ENCODE measurements at regions of chr6 and their contacts with region 1.

Region 1: DNA sequence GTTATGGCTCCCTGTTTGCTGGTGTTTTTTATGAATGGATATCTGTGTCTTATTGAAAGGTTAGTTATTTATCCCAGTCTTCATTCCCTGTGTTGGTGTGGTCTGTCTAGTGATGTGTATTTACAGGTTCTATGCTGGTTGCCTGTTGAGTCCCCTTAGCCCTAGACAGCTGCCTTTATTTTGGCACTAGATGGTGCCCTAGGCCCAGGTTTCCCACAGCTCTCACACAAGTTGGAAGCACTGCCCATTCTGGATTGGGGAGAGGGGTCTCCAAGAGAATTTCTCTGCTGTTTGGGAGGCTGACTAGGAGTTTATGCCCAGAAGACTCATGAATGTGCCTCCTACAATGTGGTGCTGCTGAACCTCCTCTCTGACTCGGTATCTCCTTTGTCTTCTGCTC is 12.4 kb downstream of the GRM1 start:
- DNase-seq: peak; percentile 32
- H3K4me3 Mint-ChIP-seq: no peak overlapping the region
- H3K27ac Mint-ChIP-seq: no peak overlapping the region
- H3K4me1 Mint-ChIP-seq: no peaks in the 10 kb centered on the region
- H3K27me3 Mint-ChIP-seq: no peaks in the 10 kb centered on the region
- CTCF ChIP-seq: peak; percentile 31

Region 2: GRCh38 chr6:146009338-146009737 is 31.9 kb before region 1 on chr6:
- CTCF ChIA-PET with region 1: no interaction called
- intact Hi-C with region 1: no loop called
- DNase-seq: no peak
- H3K4me3 Mint-ChIP-seq: no peak overlapping the region
- H3K27ac Mint-ChIP-seq: no peak overlapping the region
- H3K4me1 Mint-ChIP-seq: no peaks in the 10 kb centered on the region
- H3K27me3 Mint-ChIP-seq: no peaks in the 10 kb centered on the region
- CTCF ChIP-seq: no peak

Region 3: DNA sequence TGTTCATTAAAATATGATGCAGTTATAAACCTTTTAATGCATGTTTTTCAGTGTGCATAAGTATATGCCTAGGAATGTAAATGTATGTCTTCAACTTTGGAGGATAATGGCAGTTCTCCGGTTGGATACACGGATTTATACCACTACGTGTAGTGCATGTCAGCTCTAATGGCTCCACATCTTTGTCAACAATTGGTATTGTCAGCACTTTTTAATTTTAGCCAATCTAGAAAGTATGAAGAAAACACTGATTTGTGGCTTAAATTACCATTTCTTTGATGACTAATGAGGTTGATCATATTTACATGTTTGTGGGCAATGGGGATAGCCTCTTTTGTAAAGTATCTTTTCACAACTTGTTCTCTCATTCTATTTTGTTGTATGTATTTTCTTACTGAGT is 491.4 kb after region 1 on chr6:
- CTCF ChIA-PET with region 1: no interaction called
- intact Hi-C with region 1: loop called (anchors 10 kb)
- DNase-seq: no peak
- H3K4me3 Mint-ChIP-seq: no peak overlapping the region
- H3K27ac Mint-ChIP-seq: no peak overlapping the region
- H3K4me1 Mint-ChIP-seq: no peaks in the 10 kb centered on the region
- H3K27me3 Mint-ChIP-seq: no peaks in the 10 kb centered on the region
- CTCF ChIP-seq: no peak

Region 4: GRCh38 chr6:146700078-146700686 is 658.9 kb after region 1 on chr6:
- CTCF ChIA-PET with region 1: interaction called, 4 read pairs
- intact Hi-C with region 1: loop called (anchors 2 kb)
- DNase-seq: peak; percentile 69
- H3K4me3 Mint-ChIP-seq: no peak overlapping the region
- H3K27ac Mint-ChIP-seq: no peak overlapping the region
- H3K4me1 Mint-ChIP-seq: no peaks in the 10 kb centered on the region
- H3K27me3 Mint-ChIP-seq: no peaks in the 10 kb centered on the region
- CTCF ChIP-seq: peak; percentile 15

Region 5: GRCh38 chr6:146775226-146775625 is 733.9 kb after region 1 on chr6:
- CTCF ChIA-PET with region 1: interaction called, 3 read pairs
- intact Hi-C with region 1: loop called (anchors 5 kb)
- DNase-seq: no peak
- H3K4me3 Mint-ChIP-seq: no peak overlapping the region
- H3K27ac Mint-ChIP-seq: no peak overlapping the region
- H3K4me1 Mint-ChIP-seq: no peaks in the 10 kb centered on the region
- H3K27me3 Mint-ChIP-seq: no peaks in the 10 kb centered on the region
- CTCF ChIP-seq: no peak

Region 6: GRCh38 chr6:147285087-147285855 is 1244.0 kb after region 1 on chr6:
- CTCF ChIA-PET with region 1: no interaction called
- intact Hi-C with region 1: loop called (anchors 5 kb)
- DNase-seq: no peak
- H3K4me3 Mint-ChIP-seq: no peak overlapping the region
- H3K27ac Mint-ChIP-seq: no peak overlapping the region
- H3K4me1 Mint-ChIP-seq: peaks cover 10% of the 10 kb centered on the region
- H3K27me3 Mint-ChIP-seq: no peaks in the 10 kb centered on the region
- CTCF ChIP-seq: no peak